Caco-2 (cell line): ENCODE measurements at regions of chr1 and their contacts with region 1.

Region 1: DNA sequence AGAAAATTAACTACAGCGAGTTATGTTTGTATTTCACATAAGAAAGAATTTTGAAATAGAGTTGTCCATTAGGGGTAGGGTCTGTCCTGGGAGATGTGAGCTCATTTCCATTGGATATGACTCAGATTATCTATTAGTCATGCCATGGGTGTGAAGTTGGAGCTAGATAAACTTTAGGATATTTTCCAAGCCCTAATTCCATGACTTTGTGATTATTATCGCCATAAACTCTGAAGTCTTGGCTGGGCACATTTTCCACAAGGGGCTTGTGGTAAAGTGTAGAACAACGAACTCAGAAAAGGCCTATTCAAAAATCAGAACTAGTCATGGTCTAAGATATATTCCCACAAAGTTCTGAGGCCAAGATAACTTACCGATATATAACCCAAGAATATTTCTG is 396.6 kb downstream of the DPYD start:
- DNase-seq: no peak
- H3K4me3 ChIP-seq: no peak overlapping the region
- H3K4me3 Mint-ChIP-seq: no peak overlapping the region
- H3K27ac Mint-ChIP-seq: no peak overlapping the region
- H3K4me1 ChIP-seq: no peaks in the 10 kb centered on the region
- H3K4me1 Mint-ChIP-seq: peaks cover 7% of the 10 kb centered on the region
- H3K27me3 ChIP-seq: no peaks in the 10 kb centered on the region
- H3K27me3 Mint-ChIP-seq: no peaks in the 10 kb centered on the region
- CTCF ChIP-seq: no peak

Region 2: DNA sequence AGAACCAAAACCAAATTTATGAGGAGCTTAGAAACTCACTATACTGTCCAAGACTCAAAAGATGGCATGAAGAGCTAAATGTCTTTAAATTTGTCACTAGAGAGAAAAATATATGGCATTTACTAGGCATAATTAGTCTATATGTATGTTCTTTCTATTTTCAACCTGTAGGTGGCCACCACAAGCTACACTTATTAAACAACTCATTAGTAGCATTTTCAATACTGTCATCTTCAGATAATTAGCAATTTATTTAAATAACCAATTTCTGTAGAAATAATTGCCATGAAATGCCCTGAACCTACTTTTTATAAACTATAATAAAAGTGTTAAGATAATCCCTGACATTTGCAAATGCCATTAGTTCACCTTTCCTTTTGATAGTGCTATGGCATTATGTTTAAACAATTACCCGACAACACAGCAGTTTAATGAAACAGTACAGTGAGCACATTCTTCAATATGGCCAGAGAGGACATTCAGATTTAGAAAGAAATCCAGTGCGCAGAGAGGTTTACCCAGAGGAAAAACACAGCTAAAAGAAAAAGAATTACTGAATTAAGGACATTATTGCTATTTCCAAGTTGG is 280.1 kb before region 1 on chr1:
- CTCF ChIA-PET with region 1: interaction called, 9 read pairs
- POLR2A ChIA-PET with region 1: no interaction called
- intact Hi-C with region 1: loop called (anchors 1 kb)
- DNase-seq: no peak
- H3K4me3 ChIP-seq: no peak overlapping the region
- H3K4me3 Mint-ChIP-seq: no peak overlapping the region
- H3K27ac Mint-ChIP-seq: no peak overlapping the region
- H3K4me1 ChIP-seq: no peaks in the 10 kb centered on the region
- H3K4me1 Mint-ChIP-seq: no peaks in the 10 kb centered on the region
- H3K27me3 ChIP-seq: no peaks in the 10 kb centered on the region
- H3K27me3 Mint-ChIP-seq: no peaks in the 10 kb centered on the region
- CTCF ChIP-seq: peak; percentile 10 to 13

Region 3: DNA sequence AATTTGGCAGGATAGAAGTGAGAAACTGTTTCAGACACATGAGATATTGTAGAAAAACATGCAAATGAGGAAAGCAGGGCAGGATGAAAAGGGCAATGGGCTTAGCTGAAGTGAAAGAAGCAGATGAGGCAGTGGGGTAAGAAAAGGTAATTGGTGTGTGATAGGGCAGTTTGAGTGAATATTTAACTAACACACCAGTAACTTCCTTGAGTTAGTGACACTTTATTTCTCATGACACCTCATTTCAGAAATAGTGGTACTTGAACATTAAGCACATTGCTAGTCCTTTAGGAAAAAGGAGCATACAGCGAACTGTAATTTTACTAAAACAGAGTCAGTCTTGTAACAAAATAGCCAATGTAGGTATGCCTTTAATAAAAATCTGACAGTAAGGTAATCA is 18.4 kb before region 1 on chr1:
- CTCF ChIA-PET with region 1: no interaction called
- POLR2A ChIA-PET with region 1: no interaction called
- intact Hi-C with region 1: no loop called
- DNase-seq: no peak
- H3K4me3 ChIP-seq: no peak overlapping the region
- H3K4me3 Mint-ChIP-seq: no peak overlapping the region
- H3K27ac Mint-ChIP-seq: no peak overlapping the region
- H3K4me1 ChIP-seq: 0 out of 2 replicates have a peak, but pooled peaks cover 5% of the 10 kb centered on the region
- H3K4me1 Mint-ChIP-seq: peaks cover 12% of the 10 kb centered on the region
- H3K27me3 ChIP-seq: no peaks in the 10 kb centered on the region
- H3K27me3 Mint-ChIP-seq: no peaks in the 10 kb centered on the region
- CTCF ChIP-seq: no peak